ENCODE measurements at regions of chr5 and their contacts with region 1.

Region 1: GRCh38 chr5:78984439-78985115 is 533 bp downstream of the ARSB start:
- DNase-seq: peak; percentile 86
- H3K4me3 Mint-ChIP-seq: peak overlapping the region; percentile 84
- H3K27ac Mint-ChIP-seq: peak overlapping the region; percentile 87
- H3K4me1 Mint-ChIP-seq: peaks cover 34% of the 10 kb centered on the region
- H3K27me3 Mint-ChIP-seq: no peaks in the 10 kb centered on the region

Region 2: GRCh38 chr5:78359831-78360673 is 624.5 kb before region 1 on chr5 and contains the start of gene SCAMP1:
- CTCF ChIA-PET with region 1: no interaction called
- POLR2A ChIA-PET with region 1: interaction called, 3 read pairs
- intact Hi-C with region 1: loop called (anchors 10 kb)
- DNase-seq: peak; percentile 94
- H3K4me3 Mint-ChIP-seq: peak within 1 kb of the TSS; percentile 94
- H3K27ac Mint-ChIP-seq: peak within 1 kb of the TSS; percentile 96
- H3K4me1 Mint-ChIP-seq: peaks cover 38% of the 10 kb centered on the region
- H3K27me3 Mint-ChIP-seq: no peaks in the 10 kb centered on the region
- total RNA-seq, gene SCAMP1: 13.6 to 18.3 TPM

Region 3: GRCh38 chr5:78953092-78953800 is 31.3 kb before region 1 on chr5:
- CTCF ChIA-PET with region 1: no interaction called
- POLR2A ChIA-PET with region 1: no interaction called
- intact Hi-C with region 1: loop called (anchors 2 kb)
- DNase-seq: peak; percentile 11
- H3K4me3 Mint-ChIP-seq: no peak overlapping the region
- H3K27ac Mint-ChIP-seq: no peak overlapping the region
- H3K4me1 Mint-ChIP-seq: peaks cover 11% of the 10 kb centered on the region
- H3K27me3 Mint-ChIP-seq: no peaks in the 10 kb centered on the region

Region 4: DNA sequence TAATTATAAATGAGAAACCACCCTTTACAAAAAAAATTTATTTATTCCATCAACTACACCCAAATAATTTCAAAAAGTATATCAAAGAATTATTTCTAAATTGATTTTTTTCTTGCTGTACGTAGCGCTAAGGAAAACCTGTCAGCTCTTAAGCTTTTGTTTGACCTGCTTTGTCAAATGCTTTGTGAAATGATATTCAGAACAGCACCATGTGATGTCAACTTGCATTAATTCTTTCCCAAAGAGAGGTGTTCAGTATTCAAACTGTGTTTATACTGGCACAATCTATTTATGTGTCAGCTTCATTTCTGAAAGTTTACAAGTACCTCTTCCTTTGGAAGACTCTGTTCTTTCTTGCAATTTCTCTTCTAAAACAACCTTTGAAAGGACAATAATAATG is 12.5 kb after region 1 on chr5:
- CTCF ChIA-PET with region 1: no interaction called
- POLR2A ChIA-PET with region 1: no interaction called
- intact Hi-C with region 1: no loop called
- DNase-seq: no peak
- H3K4me3 Mint-ChIP-seq: no peak overlapping the region
- H3K27ac Mint-ChIP-seq: no peak overlapping the region
- H3K4me1 Mint-ChIP-seq: peaks cover 4% of the 10 kb centered on the region
- H3K27me3 Mint-ChIP-seq: peaks cover 14% of the 10 kb centered on the region

Region 5: GRCh38 chr5:79111960-79112702 is 127.6 kb after region 1 on chr5:
- CTCF ChIA-PET with region 1: no interaction called
- POLR2A ChIA-PET with region 1: no interaction called
- intact Hi-C with region 1: no loop called
- DNase-seq: no peak
- H3K4me3 Mint-ChIP-seq: no peak overlapping the region
- H3K27ac Mint-ChIP-seq: no peak overlapping the region
- H3K4me1 Mint-ChIP-seq: no peaks in the 10 kb centered on the region
- H3K27me3 Mint-ChIP-seq: peaks cover 47% of the 10 kb centered on the region

Region 6: GRCh38 chr5:79173626-79174025 is 189.0 kb after region 1 on chr5:
- CTCF ChIA-PET with region 1: no interaction called
- POLR2A ChIA-PET with region 1: no interaction called
- intact Hi-C with region 1: no loop called
- DNase-seq: no peak
- H3K4me3 Mint-ChIP-seq: no peak overlapping the region
- H3K27ac Mint-ChIP-seq: no peak overlapping the region
- H3K4me1 Mint-ChIP-seq: no peaks in the 10 kb centered on the region
- H3K27me3 Mint-ChIP-seq: no peaks in the 10 kb centered on the region

Region 7: GRCh38 chr5:79235634-79236363 is 251.2 kb after region 1 on chr5 and contains the start of gene JMY:
- CTCF ChIA-PET with region 1: no interaction called
- POLR2A ChIA-PET with region 1: interaction called, 6 read pairs
- intact Hi-C with region 1: loop called (anchors 1 kb)
- DNase-seq: peak; percentile 91
- H3K4me3 Mint-ChIP-seq: peak within 1 kb of the TSS; percentile 94
- H3K27ac Mint-ChIP-seq: peak within 1 kb of the TSS; percentile 98
- H3K4me1 Mint-ChIP-seq: peaks cover 15% of the 10 kb centered on the region
- H3K27me3 Mint-ChIP-seq: no peaks in the 10 kb centered on the region
- total RNA-seq, gene JMY: 8.6 to 9.1 TPM

Region 8: DNA sequence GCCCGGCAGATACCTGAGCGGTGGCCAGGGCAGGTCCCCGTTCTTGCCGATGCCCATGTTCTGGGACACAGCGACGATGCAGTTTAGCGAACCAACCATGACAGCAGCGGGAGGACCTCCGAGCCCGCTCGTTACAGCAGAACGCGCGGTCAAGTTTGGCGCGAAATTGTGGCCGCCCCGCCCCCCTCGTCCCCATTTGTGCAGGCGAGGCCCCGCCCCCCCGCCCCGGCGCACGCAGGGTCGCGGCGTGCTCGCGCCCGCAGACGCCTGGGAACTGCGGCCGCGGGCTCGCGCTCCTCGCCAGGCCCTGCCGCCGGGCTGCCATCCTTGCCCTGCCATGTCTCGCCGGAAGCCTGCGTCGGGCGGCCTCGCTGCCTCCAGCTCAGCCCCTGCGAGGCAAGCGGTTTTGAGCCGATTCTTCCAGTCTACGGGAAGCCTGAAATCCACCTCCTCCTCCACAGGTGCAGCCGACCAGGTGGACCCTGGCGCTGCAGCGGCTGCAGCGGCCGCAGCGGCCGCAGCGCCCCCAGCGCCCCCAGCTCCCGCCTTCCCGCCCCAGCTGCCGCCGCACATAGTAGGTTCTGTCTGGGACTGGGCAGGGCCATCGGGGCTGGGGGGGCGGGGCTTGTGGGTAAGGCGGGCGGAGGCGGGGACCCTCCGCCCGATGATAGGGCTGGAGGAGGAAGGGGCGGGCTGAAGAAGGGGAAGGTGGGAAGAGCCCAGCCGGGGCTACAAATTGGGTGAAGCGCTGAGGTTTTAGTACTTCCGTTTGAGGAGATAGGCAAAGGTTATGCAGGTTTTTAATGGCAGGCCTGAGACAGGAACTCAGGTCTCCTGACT is 1670.0 kb after region 1 on chr5 and contains the starts of genes DHFR and MSH3:
- CTCF ChIA-PET with region 1: no interaction called
- POLR2A ChIA-PET with region 1: no interaction called
- intact Hi-C with region 1: loop called (anchors 10 kb)
- DNase-seq: peak; percentile 95
- H3K4me3 Mint-ChIP-seq: peak within 1 kb of the TSS; percentile 82
- H3K27ac Mint-ChIP-seq: peak within 1 kb of the TSS; percentile 93
- H3K4me1 Mint-ChIP-seq: peaks cover 20% of the 10 kb centered on the region
- H3K27me3 Mint-ChIP-seq: no peaks in the 10 kb centered on the region
- total RNA-seq, gene DHFR: 108 to 110 TPM
- total RNA-seq, gene MSH3: 23.2 to 23.6 TPM